ENCODE measurements at regions of chr5 and their contacts with region 1.

Region 1: GRCh38 chr5:66171349-66172344 is 27.5 kb downstream of the SREK1 start:
- DNase-seq: no peak
- ATAC-seq: no peak

Region 2: GRCh38 chr5:66134407-66134861 is 37.2 kb before region 1 on chr5:
- intact Hi-C with region 1: no loop called
- DNase-seq: no peak
- ATAC-seq: peak; percentile 72

Region 3: DNA sequence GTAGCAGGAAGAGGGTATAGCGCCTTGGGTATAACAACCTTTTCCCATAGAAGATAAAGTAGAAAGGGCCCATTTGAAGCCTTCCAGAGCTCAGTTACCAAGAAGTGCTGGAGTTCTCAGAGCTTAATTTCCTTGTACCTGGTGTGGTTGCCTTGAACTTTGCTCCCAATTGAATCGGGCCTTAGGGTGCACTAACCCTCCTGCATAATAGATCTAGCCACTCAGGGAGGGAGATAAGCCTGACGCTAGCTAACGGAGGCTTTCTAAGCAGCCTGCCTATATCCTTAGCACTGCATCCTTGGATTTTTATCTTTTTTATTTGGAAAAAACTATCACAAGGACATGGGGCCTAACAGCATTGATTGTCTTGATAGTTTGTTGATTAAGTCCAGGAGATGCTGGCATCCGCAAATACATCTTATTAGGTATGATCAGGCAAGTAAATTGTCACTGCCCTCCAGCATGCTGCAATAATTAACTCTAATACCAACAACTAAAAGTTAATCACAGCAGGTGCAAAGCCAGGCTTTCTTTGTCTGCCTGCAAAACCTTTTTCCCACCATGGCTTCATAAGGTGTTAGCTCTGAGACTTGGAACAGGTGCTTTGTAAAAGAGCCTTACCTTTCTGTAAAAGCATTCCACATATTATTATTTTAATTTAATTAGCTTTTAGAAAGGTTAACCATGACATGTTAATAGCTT is 171.9 kb after region 1 on chr5:
- intact Hi-C with region 1: no loop called
- DNase-seq: no peak
- ATAC-seq: no peak

Region 4: DNA sequence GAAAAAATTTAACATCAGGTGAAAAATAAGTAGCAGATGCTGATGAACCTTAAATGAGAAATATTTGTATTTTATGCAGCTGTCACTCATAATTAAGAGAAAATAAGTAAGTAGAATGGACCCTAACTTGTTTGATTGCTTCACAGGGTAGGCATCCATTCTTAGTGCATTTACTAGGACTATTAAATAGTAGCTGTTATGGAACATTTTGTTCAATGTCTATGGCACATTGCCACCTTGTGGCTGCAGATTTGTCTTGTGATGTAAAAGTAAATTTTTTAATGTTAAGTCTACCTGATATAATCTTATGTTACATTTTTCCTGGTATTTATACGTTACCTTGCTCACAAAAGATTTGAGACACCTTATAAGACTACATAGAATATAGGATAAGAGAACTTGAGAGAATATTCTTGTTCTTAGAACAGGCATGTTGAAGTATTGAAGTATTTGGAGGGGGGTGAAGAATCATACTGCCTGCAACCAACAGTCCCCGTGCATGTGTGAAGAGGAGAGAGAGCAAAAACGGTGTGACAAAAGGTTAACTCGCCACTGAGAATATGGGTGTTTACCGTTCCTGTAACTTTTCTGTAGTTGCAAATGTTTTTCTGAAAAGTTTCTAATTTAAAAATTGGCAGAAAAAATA is 585.7 kb after region 1 on chr5:
- intact Hi-C with region 1: loop called (anchors 5 kb)
- DNase-seq: no peak
- ATAC-seq: peak; percentile 69

Measured in Right ventricle myocardium inferior (tissue), 1 donor.